Activated naive CD4-positive, alpha-beta T cell treated with anti-CD3 and anti-CD28 coated beads for 36 hours (primary cell): ENCODE measurements at regions of chr10 and their contacts with region 1.

Region 1: DNA sequence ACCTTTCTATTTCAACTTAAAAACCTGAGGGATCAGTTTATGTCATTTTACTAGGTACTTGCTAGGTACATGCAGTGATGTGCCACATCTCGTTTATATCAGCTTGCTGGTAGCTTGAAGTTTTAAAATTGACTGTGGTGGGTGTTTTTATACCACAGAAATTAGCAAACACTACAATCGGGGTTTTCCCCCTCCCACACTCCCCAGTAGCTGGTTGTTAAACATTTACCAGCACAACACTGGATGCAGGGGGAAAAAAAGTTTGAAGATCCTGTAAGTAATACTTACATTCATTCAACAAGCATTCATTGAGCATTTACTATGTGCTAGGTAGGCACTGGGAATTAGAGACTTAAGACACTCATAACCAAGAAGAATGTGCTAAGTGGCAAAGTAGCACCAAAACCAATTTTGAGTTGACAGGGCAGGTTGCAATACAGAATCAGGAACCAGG is 32.6 kb downstream of the USP6NL start:
- DNase-seq: peak; percentile 84
- H3K4me3 Mint-ChIP-seq: no peak overlapping the region
- H3K27ac Mint-ChIP-seq: peak overlapping the region; percentile 25
- H3K4me1 Mint-ChIP-seq: peaks cover 58% of the 10 kb centered on the region
- H3K27me3 Mint-ChIP-seq: no peaks in the 10 kb centered on the region

Region 2: DNA sequence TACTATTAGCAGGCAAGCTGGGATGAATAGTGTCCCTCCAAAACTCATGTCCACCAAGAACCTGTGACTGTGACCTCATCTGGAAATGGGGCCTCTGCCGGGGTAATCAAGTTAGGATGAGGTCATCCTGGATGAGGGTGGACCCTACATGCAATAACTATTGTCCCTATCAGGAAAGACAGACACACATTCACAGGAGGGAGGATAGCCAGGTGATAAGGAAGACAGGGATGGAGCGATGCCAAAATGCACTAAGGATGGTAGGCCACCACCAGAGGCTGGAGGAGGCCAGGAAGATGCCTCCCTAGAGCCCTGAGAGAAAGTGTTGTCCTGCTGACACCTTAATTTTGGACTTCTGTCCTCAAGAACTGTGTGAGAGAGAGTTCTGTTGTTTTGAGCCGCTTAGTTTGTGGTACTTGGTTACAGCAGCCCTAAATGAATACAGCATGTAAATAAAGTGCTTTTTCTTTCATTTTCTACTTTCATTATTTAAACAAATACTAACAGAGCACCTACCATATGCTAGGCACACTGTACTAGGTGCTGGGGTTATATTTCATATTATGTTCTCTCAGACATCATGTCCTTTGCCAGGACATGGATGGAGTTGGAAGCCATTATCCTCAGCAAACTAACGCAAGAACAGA is 79.3 kb before region 1 on chr10:
- CTCF ChIA-PET with region 1: no interaction called
- intact Hi-C with region 1: no loop called
- DNase-seq: no peak
- H3K4me3 Mint-ChIP-seq: no peak overlapping the region
- H3K27ac Mint-ChIP-seq: no peak overlapping the region
- H3K4me1 Mint-ChIP-seq: peaks cover 1% of the 10 kb centered on the region
- H3K27me3 Mint-ChIP-seq: no peaks in the 10 kb centered on the region

Region 3: GRCh38 chr10:11551916-11552602 is 26.8 kb before region 1 on chr10:
- CTCF ChIA-PET with region 1: interaction called, 5 read pairs
- intact Hi-C with region 1: loop called (anchors 1 kb)
- DNase-seq: no peak
- H3K4me3 Mint-ChIP-seq: no peak overlapping the region
- H3K27ac Mint-ChIP-seq: peak overlapping the region; percentile 68
- H3K4me1 Mint-ChIP-seq: peaks cover 39% of the 10 kb centered on the region
- H3K27me3 Mint-ChIP-seq: no peaks in the 10 kb centered on the region

Region 4: GRCh38 chr10:11611248-11612020 is 32.6 kb after region 1 on chr10 and contains the start of gene USP6NL:
- CTCF ChIA-PET with region 1: interaction called, 5 read pairs
- intact Hi-C with region 1: loop called (anchors 1 kb)
- DNase-seq: peak; percentile 70
- H3K4me3 Mint-ChIP-seq: peak within 1 kb of the TSS; percentile 84
- H3K27ac Mint-ChIP-seq: peak within 1 kb of the TSS; percentile 73
- H3K4me1 Mint-ChIP-seq: peaks cover 40% of the 10 kb centered on the region
- H3K27me3 Mint-ChIP-seq: no peaks in the 10 kb centered on the region
- total RNA-seq, gene USP6NL: 6.9 to 7.5 TPM

Region 5: DNA sequence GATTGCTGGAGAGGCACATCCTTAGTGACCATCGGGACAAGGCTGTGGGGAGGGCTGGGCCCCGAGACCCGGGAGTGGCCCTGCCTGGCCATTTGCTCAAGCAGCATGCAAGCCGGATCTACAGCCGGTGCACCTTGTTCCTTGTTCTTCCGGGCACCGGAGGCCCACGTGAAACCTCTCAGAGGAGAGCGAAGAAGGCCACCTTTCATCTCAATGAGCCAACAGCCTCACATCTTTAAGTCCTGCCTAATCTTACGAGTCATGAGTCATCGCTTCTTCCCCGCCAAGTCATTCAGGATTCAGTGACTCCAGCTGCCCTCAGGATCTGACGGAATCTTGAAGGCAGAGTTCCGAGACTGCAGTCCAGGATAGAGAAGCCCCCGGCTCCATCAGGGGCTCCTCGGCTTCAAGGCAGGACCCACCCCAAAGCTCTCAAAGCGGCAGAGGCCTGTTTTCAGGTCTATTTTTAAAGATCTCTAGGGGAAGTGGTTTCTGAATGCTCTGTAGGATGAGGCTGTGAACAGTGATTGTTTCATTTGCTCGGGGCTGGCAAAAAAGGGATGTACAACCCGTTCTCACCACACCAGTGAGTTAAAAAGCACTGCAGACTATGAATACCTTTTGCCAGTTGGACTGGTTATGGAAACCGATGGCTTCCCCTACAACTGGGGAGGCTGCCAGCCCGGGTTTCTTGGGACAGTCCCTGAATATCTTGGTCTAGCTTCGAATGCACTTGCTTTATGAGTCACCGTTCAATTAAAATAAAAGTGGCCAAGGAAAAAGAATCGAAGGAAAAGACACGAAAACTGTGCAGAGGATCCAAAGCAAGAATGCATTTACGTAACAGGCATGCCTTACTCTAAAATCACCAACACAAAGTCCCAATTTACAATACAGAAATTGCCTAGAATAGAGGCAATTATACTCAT is 106.2 kb after region 1 on chr10:
- CTCF ChIA-PET with region 1: no interaction called
- intact Hi-C with region 1: loop called (anchors 1 kb)
- DNase-seq: peak; percentile 86
- H3K4me3 Mint-ChIP-seq: peak overlapping the region; percentile 75
- H3K27ac Mint-ChIP-seq: peak overlapping the region; percentile 95
- H3K4me1 Mint-ChIP-seq: peaks cover 36% of the 10 kb centered on the region
- H3K27me3 Mint-ChIP-seq: peaks cover 1% of the 10 kb centered on the region

Region 6: GRCh38 chr10:11986593-11987216 is 407.9 kb after region 1 on chr10:
- CTCF ChIA-PET with region 1: no interaction called
- intact Hi-C with region 1: no loop called
- DNase-seq: peak; percentile 88
- H3K4me3 Mint-ChIP-seq: no peak overlapping the region
- H3K27ac Mint-ChIP-seq: no peak overlapping the region
- H3K4me1 Mint-ChIP-seq: peaks cover 5% of the 10 kb centered on the region
- H3K27me3 Mint-ChIP-seq: no peaks in the 10 kb centered on the region

Region 7: GRCh38 chr10:12121673-12122072 is 542.8 kb after region 1 on chr10:
- CTCF ChIA-PET with region 1: no interaction called
- intact Hi-C with region 1: loop called (anchors 1 kb)
- DNase-seq: no peak
- H3K4me3 Mint-ChIP-seq: no peak overlapping the region
- H3K27ac Mint-ChIP-seq: peak overlapping the region; percentile 98
- H3K4me1 Mint-ChIP-seq: peaks cover 30% of the 10 kb centered on the region
- H3K27me3 Mint-ChIP-seq: no peaks in the 10 kb centered on the region